Gastrocnemius medialis (tissue), 4 donors: ENCODE measurements at regions of chr2 and their contacts with region 1.

Region 1: DNA sequence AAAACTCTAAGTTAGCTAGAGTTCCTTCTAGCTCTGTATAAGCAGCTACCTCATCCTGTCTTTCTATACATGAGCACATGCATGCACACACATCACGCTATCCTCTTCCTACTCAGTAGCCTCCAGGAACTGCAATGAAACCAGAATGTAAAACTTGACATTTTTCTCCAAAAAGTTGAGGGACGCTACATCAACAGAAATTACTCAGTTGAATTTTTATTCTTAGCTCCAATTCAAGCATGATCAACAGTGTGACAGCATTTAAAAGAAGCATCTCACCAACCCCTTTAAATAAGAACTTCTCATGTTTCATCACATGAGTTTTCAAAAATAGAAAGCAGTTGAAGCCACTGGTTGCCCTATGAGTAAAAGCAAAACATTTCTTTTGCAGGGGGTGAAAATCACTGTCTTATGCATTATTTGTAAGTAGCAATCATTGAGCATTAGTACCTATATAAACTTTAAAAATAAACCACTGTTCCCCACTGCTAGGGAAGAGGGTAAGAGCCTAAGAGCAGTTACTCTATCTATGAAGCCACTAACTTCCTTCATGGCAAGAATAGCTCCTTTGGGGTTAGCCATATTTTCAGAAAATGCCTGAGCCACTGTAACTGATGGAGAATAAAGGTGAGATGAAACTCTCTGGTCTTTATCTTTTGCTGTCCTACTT is 77.9 kb upstream of the ARL5A start:
- DNase-seq: no peak
- ATAC-seq: peak; percentile 94 to 96
- H3K4me3 ChIP-seq: no peak overlapping the region
- H3K27ac ChIP-seq: peak overlapping the region; percentile 76 to 84 (median 82)
- H3K4me1 ChIP-seq: peaks cover 36 to 41% of the 10 kb centered on the region in 2 donors
- H3K27me3 ChIP-seq: no peaks in the 10 kb centered on the region
- CTCF ChIP-seq: no peak
- POLR2A ChIP-seq: no peak

Region 2: DNA sequence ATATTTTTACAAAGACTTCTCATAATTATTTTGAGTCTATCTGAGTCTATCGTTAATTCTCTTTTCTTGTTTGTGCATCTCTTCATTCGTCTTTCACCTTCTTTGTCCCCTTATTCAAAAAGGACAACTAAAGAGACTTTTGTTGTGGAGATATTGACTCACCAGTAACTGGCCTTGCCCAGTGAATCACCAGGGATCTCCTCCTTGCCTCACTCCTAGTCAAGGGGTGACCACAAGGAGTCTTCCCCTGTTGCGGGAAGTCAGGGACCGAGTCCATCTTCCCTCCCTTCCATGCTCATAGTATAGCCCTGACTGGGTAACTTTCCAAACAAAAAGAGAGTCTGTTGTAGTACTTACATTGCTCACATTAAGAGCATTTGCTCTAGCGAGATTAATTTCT is 330.8 kb before region 1 on chr2:
- in situ Hi-C with region 1: no loop called
- intact Hi-C with region 1: no loop called
- DNase-seq: no peak
- ATAC-seq: no peak
- H3K4me3 ChIP-seq: no peak overlapping the region
- H3K27ac ChIP-seq: peak overlapping the region in 3 of 4 donors; percentile 6 to 45 (median 32)
- H3K4me1 ChIP-seq: no peaks in the 10 kb centered on the region
- H3K27me3 ChIP-seq: no peaks in the 10 kb centered on the region
- CTCF ChIP-seq: no peak
- POLR2A ChIP-seq: no peak

Region 3: DNA sequence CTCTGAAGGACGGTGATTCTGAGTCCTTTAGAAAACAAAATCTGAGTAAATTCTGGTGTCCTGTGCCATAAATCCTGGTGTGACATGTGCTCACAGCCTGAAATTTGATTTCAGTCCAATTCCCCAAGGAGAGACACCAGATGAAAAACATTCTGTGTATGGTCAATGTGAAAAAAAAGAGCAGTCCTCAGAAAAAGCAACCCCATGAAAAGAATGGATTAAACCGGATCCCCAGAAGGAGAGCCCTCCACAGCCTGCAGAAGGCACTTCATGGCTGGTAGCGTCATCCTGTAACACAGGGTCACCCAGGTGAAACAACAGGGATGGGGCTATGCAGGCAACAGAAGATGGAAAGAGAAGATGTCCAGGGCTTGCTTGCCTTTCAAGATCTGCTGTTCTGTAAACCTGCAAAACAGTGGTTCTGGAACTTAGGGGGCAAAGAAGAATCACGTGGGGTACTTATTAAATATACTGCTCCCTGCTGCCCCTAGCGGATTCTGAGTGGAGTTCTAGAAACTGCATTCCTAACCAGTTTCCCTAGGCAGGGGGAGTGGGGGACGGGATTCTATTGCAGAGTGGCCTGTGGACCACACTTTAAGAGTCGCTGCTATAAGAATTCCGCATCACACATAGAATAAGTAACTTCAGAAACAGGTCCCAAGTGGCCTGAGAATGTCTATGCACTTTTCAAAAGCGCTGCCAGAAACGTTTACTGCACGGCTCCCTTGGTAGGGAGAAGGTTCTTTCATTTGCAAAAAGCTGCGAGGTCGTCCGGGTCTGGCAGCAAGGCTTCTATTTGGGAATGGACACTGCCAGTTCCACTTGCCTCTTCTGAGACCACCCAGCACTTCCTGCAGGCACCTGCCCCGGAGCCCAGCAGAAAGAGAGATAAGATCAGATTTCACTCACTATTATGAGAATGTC is 41.1 kb after region 1 on chr2:
- in situ Hi-C with region 1: no loop called
- intact Hi-C with region 1: loop called (anchors 5 kb)
- DNase-seq: no peak
- ATAC-seq: peak; percentile 44 to 79
- H3K4me3 ChIP-seq: peak overlapping the region; percentile 8 to 52 (median 40)
- H3K27ac ChIP-seq: peak overlapping the region in 3 of 4 donors; percentile 19 to 47 (median 21)
- H3K4me1 ChIP-seq: peaks cover 4 to 17% of the 10 kb centered on the region in 2 donors
- H3K27me3 ChIP-seq: no peaks in the 10 kb centered on the region
- CTCF ChIP-seq: peak; percentile 61 to 70 (median 66)
- POLR2A ChIP-seq: no peak